Activated CD4-positive, alpha-beta T cell treated with anti-CD3 and anti-CD28 coated beads for 36 hours (primary cell): ENCODE measurements at regions of chr7 and their contacts with region 1.

Region 1: GRCh38 chr7:130649004-130649790 is 19.4 kb downstream of the COPG2 start:
- DNase-seq: peak; percentile 42
- ATAC-seq: peak; percentile 95
- H3K4me3 Mint-ChIP-seq: peak overlapping the region; percentile 32
- H3K27ac Mint-ChIP-seq: peak overlapping the region; percentile 87
- H3K4me1 Mint-ChIP-seq: peaks cover 33% of the 10 kb centered on the region
- H3K27me3 Mint-ChIP-seq: no peaks in the 10 kb centered on the region

Region 2: DNA sequence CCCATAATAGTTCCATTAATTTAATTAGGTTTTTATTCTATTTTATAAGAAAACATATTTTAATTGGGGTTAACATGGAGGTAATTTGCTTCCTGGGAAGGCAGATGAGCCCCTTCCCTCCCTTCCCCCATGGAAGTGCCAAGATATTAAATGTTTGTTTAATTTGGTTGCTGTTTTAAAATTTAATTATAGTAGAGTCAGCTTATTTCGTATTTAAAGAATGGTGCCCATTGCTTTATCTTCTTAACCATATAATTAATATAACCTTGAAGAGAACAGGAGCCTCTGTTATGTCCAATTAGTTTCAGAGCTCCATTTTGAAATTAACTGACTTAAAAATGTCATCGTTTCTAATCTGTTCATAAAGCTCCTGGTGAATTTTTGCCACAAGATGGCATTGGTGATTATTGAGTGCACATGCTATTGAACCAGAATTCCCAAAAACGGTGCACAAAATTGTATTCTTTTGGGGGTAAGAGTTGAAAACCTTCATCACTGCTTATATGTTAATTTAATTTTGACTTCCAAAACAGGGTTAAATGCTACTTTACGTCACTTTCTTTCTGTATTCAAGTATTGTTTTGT is 552.9 kb before region 1 on chr7:
- CTCF ChIA-PET with region 1: no interaction called
- POLR2A ChIA-PET with region 1: no interaction called
- intact Hi-C with region 1: no loop called
- DNase-seq: no peak
- ATAC-seq: no peak
- H3K4me3 Mint-ChIP-seq: no peak overlapping the region
- H3K27ac Mint-ChIP-seq: no peak overlapping the region
- H3K4me1 Mint-ChIP-seq: peaks cover 7% of the 10 kb centered on the region
- H3K27me3 Mint-ChIP-seq: no peaks in the 10 kb centered on the region

Region 3: DNA sequence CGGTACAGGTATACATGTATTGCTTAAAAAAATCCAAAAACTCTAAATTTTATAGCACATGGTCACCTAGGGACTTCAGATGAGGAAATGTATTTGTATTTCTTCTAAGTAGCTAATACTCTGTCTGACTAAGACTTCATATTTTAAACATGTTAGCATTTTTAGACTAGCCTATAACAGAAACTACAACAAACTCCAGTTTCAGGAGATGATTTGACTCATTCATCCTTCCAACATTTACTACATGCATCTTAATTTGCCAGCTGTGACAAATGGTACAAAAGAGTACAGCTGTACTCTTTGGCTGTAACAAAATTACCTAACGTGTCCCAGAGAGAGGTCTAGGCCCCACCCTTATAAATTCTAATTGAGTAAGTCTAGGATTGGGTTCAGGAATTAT is 466.2 kb before region 1 on chr7:
- CTCF ChIA-PET with region 1: no interaction called
- POLR2A ChIA-PET with region 1: no interaction called
- intact Hi-C with region 1: loop called in 1 of 2 experiments (anchors 1 kb)
- DNase-seq: no peak
- ATAC-seq: peak; percentile 38
- H3K4me3 Mint-ChIP-seq: no peak overlapping the region
- H3K27ac Mint-ChIP-seq: peak overlapping the region; percentile 72
- H3K4me1 Mint-ChIP-seq: peaks cover 33% of the 10 kb centered on the region
- H3K27me3 Mint-ChIP-seq: no peaks in the 10 kb centered on the region

Region 4: DNA sequence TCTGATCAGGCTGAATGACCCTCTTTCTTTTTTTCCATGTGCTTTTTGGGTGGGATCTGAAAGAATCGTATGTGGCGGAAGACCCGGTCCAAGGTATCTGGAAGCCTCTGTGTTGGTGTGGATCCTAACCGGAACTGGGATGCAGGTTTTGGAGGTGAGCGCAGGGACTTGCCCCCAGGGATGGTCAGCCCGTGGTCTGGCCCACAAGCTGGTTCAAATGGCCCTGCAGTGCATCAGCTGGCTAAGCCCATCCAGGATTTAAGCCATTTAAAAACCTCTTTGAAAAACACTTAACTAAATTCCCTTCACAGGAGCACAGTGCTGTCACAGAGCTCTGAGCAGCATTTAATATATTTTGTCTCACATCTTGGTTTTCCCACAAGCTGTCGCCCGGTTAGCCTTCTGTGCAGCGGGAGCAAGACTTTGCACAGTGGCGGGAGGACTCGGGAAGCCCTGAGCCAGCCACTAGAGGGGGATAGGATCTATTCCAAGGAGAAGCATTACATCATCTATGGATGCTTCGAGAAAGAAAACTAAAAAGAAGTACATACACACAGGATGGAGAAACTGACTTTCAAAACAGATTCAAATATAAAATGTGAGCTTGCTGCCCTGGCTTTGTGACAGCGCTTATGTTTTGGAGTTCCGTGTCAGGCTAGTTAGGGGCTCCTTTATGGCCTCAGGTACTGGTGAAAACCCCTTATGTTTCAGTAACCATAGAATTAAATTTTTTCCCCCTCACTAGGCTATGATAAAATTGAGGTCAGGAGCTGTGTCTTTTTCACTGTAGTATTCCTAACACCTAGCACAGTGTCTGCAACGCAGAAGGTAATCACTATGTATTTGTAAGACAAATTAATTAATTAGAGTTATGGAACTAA is 371.2 kb before region 1 on chr7:
- CTCF ChIA-PET with region 1: no interaction called
- POLR2A ChIA-PET with region 1: no interaction called
- intact Hi-C with region 1: loop called (anchors 1 to 5 kb)
- DNase-seq: no peak
- ATAC-seq: no peak
- H3K4me3 Mint-ChIP-seq: no peak overlapping the region
- H3K27ac Mint-ChIP-seq: peak overlapping the region; percentile 79
- H3K4me1 Mint-ChIP-seq: peaks cover 37% of the 10 kb centered on the region
- H3K27me3 Mint-ChIP-seq: peaks cover 4% of the 10 kb centered on the region

Region 5: DNA sequence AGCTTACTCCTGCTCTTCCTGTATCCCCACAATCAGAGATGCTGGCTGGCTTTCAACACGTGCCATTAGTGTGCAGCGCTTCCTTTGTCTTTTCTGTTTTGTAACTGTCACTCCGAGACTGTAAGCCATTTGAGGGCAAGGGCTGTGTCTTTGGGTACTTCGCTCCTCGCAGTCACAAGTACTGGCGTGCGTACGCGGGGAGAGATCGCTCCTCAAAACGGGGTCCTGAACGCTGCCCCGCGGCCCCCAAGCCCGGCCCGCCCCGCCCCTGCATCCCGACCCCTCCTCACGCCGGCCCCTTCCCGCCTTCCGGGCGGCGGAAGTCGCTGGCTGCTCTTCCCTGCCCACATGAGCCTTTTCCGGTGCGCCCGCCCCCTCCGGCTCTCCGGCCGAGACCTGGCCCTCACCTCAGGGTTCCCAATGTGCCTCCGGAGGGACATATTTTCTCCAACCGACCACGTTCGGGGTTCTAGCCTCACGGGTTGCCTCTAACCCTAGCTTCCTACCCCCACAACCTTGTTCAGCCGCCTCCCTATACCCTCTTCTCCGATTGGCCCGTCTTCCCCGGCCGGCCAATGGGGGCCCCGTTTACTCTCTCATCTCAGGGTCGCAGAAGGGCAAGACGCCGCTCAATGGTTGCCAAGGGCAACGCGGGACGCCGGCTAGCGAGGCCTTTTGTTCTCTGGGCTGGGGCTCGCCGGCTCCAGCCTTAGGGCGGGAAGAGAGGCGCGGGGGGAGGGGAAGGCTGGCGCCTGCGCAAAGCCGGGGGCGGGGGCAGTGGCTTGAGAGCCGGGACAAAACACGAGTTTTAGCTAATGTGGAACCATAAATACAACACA is 208.5 kb before region 1 on chr7 and contains the start of gene CEP41:
- CTCF ChIA-PET with region 1: no interaction called
- POLR2A ChIA-PET with region 1: no interaction called
- intact Hi-C with region 1: loop called (anchors 1 to 2 kb)
- DNase-seq: peak; percentile 97
- ATAC-seq: peak; percentile 96
- H3K4me3 Mint-ChIP-seq: peak within 1 kb of the TSS; percentile 95
- H3K27ac Mint-ChIP-seq: peak within 1 kb of the TSS; percentile 99
- H3K4me1 Mint-ChIP-seq: peaks cover 49% of the 10 kb centered on the region
- H3K27me3 Mint-ChIP-seq: no peaks in the 10 kb centered on the region
- total RNA-seq, gene CEP41: 19.7 to 21.2 TPM

Region 6: DNA sequence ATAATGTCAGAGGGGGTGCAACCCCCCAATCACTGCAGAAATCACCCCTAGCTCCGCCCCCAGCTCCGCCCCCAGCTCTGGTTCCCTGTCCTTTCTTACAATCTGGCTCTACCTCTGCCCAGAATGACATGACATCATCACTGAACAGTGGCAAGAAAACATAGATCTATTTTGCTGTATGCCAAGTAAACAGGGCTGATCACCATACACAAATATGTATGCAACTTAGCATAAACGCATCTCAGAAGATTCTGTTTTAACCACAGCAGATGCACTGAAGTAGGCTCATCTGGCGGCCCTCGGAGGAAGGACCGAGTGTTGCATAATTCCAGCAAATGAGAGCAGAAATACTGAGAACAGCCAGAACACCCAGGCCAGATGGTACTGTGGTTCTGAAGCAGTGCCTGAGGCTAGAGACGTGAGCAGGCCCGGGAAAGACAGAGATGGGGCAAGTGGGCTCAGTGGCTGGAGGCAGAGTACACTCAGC is 378.1 kb after region 1 on chr7:
- CTCF ChIA-PET with region 1: no interaction called
- POLR2A ChIA-PET with region 1: no interaction called
- intact Hi-C with region 1: loop called in 1 of 2 experiments (anchors 5 kb)
- DNase-seq: peak; percentile 70
- ATAC-seq: peak; percentile 27
- H3K4me3 Mint-ChIP-seq: peak overlapping the region; percentile 25
- H3K27ac Mint-ChIP-seq: peak overlapping the region; percentile 85
- H3K4me1 Mint-ChIP-seq: peaks cover 85% of the 10 kb centered on the region
- H3K27me3 Mint-ChIP-seq: no peaks in the 10 kb centered on the region

Region 7: DNA sequence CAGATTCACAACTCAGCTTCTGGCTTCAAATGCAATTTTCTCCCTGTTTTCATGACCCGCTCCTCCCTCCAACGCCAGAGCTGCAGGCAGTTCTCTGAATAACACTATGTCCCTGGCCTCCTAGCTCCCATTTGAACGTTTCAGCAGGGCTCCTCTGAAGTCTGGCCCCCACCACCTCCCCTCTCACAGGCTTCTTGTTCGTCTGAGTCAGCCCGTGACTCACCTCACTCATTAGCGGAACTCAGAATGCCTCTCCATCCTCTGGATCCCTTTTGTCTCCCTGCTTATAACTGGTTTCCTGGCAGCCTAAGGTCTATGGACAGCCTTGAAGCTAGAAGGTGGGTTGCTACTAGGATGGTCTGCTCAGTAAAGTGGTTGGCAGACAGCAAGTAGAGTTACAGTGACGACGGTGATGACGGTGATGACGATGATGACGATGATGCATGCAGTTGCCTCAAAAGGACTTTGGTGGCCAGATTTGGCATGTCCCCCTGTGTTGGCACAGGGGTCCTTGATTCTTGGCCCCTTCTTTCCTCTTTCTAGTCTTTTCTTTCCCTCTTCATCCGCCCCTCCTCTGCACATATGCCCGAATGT is 595.2 kb after region 1 on chr7:
- CTCF ChIA-PET with region 1: no interaction called
- POLR2A ChIA-PET with region 1: no interaction called
- intact Hi-C with region 1: no loop called
- DNase-seq: peak; percentile 31
- ATAC-seq: peak; percentile 63
- H3K4me3 Mint-ChIP-seq: no peak overlapping the region
- H3K27ac Mint-ChIP-seq: no peak overlapping the region
- H3K4me1 Mint-ChIP-seq: peaks cover 2% of the 10 kb centered on the region
- H3K27me3 Mint-ChIP-seq: peaks cover 2% of the 10 kb centered on the region